Right cardiac atrium (tissue), 5 donors: ENCODE measurements at regions of chr10 and their contacts with region 1.

Region 1: DNA sequence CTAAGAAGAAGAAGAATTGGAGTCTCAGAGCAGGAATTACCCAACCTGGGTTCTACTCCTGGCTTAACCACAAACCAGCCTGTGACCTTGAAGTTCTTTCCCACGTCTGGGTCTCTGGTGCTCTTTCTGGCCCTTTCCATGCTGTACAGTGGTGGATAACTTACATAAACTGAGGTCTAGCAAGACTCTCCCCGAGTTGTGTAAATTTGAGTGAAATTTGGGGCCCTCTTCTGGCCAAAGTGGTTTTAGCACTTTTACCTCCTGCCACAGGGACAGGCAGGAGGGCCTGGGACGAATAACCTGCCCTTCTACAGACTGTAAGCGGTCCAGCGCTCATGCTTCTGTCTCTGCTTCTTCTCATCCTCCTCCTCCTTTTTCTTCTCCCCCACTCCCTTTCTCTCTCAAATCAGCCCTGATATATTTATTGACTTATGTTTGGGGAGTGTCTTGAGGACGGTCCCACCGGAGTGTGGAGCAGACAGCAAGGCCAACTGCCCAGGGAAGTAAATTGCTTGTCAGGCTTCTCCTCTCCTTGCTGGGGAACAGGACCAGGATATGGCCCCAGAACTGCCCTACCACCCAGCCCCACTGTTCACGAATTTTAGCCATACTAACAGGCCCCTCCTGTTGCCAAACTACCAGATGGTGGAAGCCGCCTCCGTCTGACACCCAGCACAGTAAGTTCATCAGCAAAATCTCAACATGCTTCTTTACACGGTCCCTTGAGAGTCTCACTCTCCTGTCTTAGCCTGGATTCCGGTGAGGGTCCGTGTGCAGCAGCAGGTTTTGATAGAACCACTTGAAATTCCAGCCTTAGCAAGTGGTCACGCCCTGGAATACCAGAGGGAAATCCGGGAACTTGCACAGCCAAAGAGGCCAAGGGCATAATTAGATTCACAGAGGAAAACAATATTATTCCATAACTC is 4.0 kb upstream of the SH3PXD2A start:
- DNase-seq: peak in 1 of 3 donors; percentile 62
- ATAC-seq: peak; percentile 72 to 73
- H3K4me3 ChIP-seq: no peak overlapping the region
- H3K27ac ChIP-seq: no peak overlapping the region
- H3K4me1 ChIP-seq: peaks cover 2% of the 10 kb centered on the region
- H3K27me3 ChIP-seq: no peaks in the 10 kb centered on the region

Region 2: GRCh38 chr10:103025696-103026095 is 833.7 kb before region 1 on chr10:
- intact Hi-C with region 1: no loop called
- DNase-seq: no peak
- ATAC-seq: no peak
- H3K4me3 ChIP-seq: no peak overlapping the region
- H3K27ac ChIP-seq: no peak overlapping the region
- H3K4me1 ChIP-seq: no peaks in the 10 kb centered on the region
- H3K27me3 ChIP-seq: no peaks in the 10 kb centered on the region

Region 3: GRCh38 chr10:103685880-103686669 is 173.3 kb before region 1 on chr10:
- intact Hi-C with region 1: no loop called
- DNase-seq: peak; percentile 72 to 91 (median 90)
- ATAC-seq: peak; percentile 76 to 78
- H3K4me3 ChIP-seq: no peak overlapping the region
- H3K27ac ChIP-seq: no peak overlapping the region
- H3K4me1 ChIP-seq: peaks cover 2% of the 10 kb centered on the region
- H3K27me3 ChIP-seq: no peaks in the 10 kb centered on the region

Region 4: GRCh38 chr10:103712570-103713498 is 146.6 kb before region 1 on chr10:
- intact Hi-C with region 1: loop called (anchors 1 to 5 kb)
- DNase-seq: peak; percentile 75 to 93 (median 86)
- ATAC-seq: peak; percentile 66 to 83
- H3K4me3 ChIP-seq: no peak overlapping the region
- H3K27ac ChIP-seq: no peak overlapping the region
- H3K4me1 ChIP-seq: peaks cover under 1% of the 10 kb centered on the region
- H3K27me3 ChIP-seq: no peaks in the 10 kb centered on the region

Region 5: GRCh38 chr10:103772096-103772845 is 87.2 kb before region 1 on chr10:
- intact Hi-C with region 1: loop called in 1 of 4 experiments (anchors 10 kb)
- DNase-seq: peak; percentile 90 to 96 (median 95)
- ATAC-seq: peak; percentile 94 to 95
- H3K4me3 ChIP-seq: peak overlapping the region; percentile 22
- H3K27ac ChIP-seq: peak overlapping the region; percentile 52
- H3K4me1 ChIP-seq: no peaks in the 10 kb centered on the region
- H3K27me3 ChIP-seq: no peaks in the 10 kb centered on the region

Region 6: GRCh38 chr10:103820101-103821062 is 39.0 kb before region 1 on chr10:
- intact Hi-C with region 1: no loop called
- DNase-seq: peak; percentile 85 to 94 (median 94)
- ATAC-seq: peak; percentile 89 to 92
- H3K4me3 ChIP-seq: no peak overlapping the region
- H3K27ac ChIP-seq: no peak overlapping the region
- H3K4me1 ChIP-seq: peaks cover 4% of the 10 kb centered on the region
- H3K27me3 ChIP-seq: no peaks in the 10 kb centered on the region